SK-N-SH (cell line): ENCODE measurements at regions of chr10 and their contacts with region 1.

Region 1: DNA sequence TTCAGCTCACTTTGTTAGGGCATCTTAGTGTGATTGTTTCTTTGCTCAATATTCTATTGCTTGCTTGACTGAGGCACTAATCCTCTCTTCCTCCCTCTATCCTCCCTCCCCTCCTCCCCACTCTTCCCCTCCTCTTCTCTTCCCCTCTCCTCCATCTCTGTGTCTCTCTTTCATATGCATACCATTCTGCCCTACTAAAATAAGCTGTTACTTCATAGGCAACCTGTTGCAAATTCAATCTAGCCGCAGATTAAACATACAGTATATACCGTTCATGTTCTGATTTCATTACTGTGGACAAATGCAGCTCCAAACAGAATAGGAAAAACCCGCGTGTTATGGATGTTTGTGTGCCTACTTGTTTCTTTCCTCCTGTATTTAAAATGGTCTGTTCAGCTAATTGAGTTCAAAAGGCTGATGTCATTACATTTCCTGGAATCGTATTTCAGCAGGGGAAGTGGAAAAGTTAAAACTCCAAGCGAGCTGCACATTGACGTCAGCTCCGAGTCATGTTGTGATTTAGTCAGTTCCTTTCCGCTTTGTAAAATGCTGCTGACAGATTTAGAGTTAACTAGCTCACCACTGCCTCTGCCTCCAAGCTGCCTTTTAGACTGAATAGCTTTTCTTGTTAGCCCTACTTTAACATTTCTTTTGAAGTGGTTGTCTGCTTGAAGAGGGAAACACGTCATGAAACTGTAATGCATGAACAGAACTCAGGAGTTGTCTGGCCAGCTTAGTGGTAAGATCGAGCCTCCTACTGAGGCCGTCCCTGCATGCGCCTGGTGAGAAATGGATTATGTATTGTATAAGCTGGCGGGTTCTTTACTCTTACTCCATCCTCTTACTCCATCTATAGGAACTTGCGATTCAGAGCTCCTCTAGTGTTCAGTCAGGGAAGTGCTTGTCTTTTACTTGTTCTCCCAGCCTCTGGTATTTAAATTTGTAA is 69.0 kb downstream of the CREM start:
- DNase-seq: peak; percentile 70
- H3K4me3 ChIP-seq: peak overlapping the region; percentile 53 to 62
- H3K27ac ChIP-seq: peak overlapping the region; percentile 92 to 96
- H3K4me1 ChIP-seq: peaks cover 0 to 3% of the 10 kb centered on the region in 2 experiments; a peak in 3 of 4 replicates
- H3K27me3 ChIP-seq: no peaks in the 10 kb centered on the region
- CTCF ChIP-seq: peak; percentile 83
- EP300 ChIP-seq: peak in 1 of 2 experiments; percentile 19; a peak in 2 of 4 replicates
- RAD21 ChIP-seq: peak; percentile 72

Region 2: GRCh38 chr10:34816501-34817002 is 379.1 kb before region 1 on chr10:
- CTCF ChIA-PET with region 1: no interaction called
- POLR2A ChIA-PET with region 1: no interaction called
- DNase-seq: peak; percentile 49
- H3K4me3 ChIP-seq: peak overlapping the region in 1 of 2 experiments; percentile 90; a peak in 3 of 4 replicates
- H3K27ac ChIP-seq: no peak overlapping the region
- H3K4me1 ChIP-seq: peaks cover 6 to 26% of the 10 kb centered on the region in 2 experiments; a peak in 2 of 4 replicates
- H3K27me3 ChIP-seq: no peaks in the 10 kb centered on the region
- CTCF ChIP-seq: no peak
- EP300 ChIP-seq: no peak
- RAD21 ChIP-seq: peak; percentile 36; the same call in 1 of the 2 replicates

Region 3: GRCh38 chr10:35119378-35119777 is 76.3 kb before region 1 on chr10:
- CTCF ChIA-PET with region 1: interaction called, 27 read pairs
- POLR2A ChIA-PET with region 1: interaction called, 3 read pairs
- DNase-seq: no peak
- H3K4me3 ChIP-seq: no peak overlapping the region
- H3K27ac ChIP-seq: no peak overlapping the region
- H3K4me1 ChIP-seq: no peaks in the 10 kb centered on the region
- H3K27me3 ChIP-seq: no peaks in the 10 kb centered on the region
- CTCF ChIP-seq: no peak
- EP300 ChIP-seq: no peak
- RAD21 ChIP-seq: no peak

Region 4: GRCh38 chr10:35136263-35136815 is 59.3 kb before region 1 on chr10:
- CTCF ChIA-PET with region 1: interaction called, 17 read pairs
- POLR2A ChIA-PET with region 1: no interaction called
- DNase-seq: no peak
- H3K4me3 ChIP-seq: no peak overlapping the region
- H3K27ac ChIP-seq: no peak overlapping the region
- H3K4me1 ChIP-seq: peaks cover 0 to under 1% of the 10 kb centered on the region in 2 experiments; a peak in 1 of 4 replicates
- H3K27me3 ChIP-seq: no peaks in the 10 kb centered on the region
- CTCF ChIP-seq: no peak
- EP300 ChIP-seq: no peak
- RAD21 ChIP-seq: no peak

Region 5: GRCh38 chr10:35208536-35208935 is 12.9 kb after region 1 on chr10:
- CTCF ChIA-PET with region 1: interaction called, 50 read pairs
- POLR2A ChIA-PET with region 1: no interaction called
- DNase-seq: no peak
- H3K4me3 ChIP-seq: no peak overlapping the region
- H3K27ac ChIP-seq: no peak overlapping the region
- H3K4me1 ChIP-seq: no peaks in the 10 kb centered on the region; a peak in 1 of 4 replicates
- H3K27me3 ChIP-seq: no peaks in the 10 kb centered on the region
- CTCF ChIP-seq: no peak
- EP300 ChIP-seq: no peak
- RAD21 ChIP-seq: no peak